MCF 10A (cell line): ENCODE measurements at regions of chr5 and their contacts with region 1.

Region 1: DNA sequence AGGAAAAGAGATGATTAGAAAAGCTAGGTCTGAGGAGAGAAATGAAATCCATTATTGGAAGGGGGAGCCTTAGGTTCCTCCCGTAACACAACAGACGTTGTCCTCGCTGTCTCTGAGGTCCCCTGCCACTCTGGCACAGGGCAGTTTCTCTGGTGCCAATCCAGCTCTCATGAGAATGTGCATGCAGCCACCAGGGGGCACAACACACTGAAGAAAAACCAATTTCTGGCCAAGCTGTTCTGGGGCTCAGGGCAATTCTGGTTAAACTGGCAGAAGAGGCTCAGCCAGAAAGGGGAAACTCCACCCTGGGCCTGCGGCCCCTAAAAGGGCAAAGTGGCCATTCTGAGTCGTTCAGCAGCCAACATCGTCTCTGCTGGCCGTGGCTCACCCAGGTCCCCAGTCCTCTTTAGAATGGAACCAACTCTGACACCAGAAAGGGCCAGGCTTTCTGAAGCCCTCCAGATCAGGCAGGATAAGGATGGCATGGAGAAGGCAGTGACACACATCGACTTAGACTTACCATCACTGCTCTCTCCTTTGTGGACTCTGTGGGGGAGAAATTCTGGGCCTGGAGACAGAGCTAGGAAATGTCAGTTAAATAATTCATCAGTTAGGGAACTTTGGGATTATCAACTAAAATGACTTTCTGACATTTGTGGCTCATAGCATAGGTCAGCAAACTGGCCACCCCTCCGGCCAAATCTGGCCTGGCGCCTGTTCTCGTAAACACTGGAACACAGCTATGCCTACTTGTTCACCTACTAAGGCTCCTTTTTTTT is 58.5 kb upstream of the GOLPH3 start:
- DNase-seq: peak; percentile 75
- H3K4me3 Mint-ChIP-seq: no peak overlapping the region
- H3K27ac Mint-ChIP-seq: no peak overlapping the region
- H3K4me1 Mint-ChIP-seq: no peaks in the 10 kb centered on the region
- H3K27me3 Mint-ChIP-seq: no peaks in the 10 kb centered on the region
- CTCF ChIP-seq: peak; percentile 62

Region 2: GRCh38 chr5:31993165-31993961 is 239.3 kb before region 1 on chr5:
- CTCF ChIA-PET with region 1: no interaction called
- POLR2A ChIA-PET with region 1: no interaction called
- intact Hi-C with region 1: no loop called
- DNase-seq: peak; percentile 39
- H3K4me3 Mint-ChIP-seq: no peak overlapping the region
- H3K27ac Mint-ChIP-seq: no peak overlapping the region
- H3K4me1 Mint-ChIP-seq: peaks cover 42% of the 10 kb centered on the region
- H3K27me3 Mint-ChIP-seq: no peaks in the 10 kb centered on the region
- CTCF ChIP-seq: no peak

Region 3: GRCh38 chr5:32217886-32218396 is 14.7 kb before region 1 on chr5:
- CTCF ChIA-PET with region 1: interaction called, 18 read pairs
- POLR2A ChIA-PET with region 1: no interaction called
- intact Hi-C with region 1: no loop called
- DNase-seq: no peak
- H3K4me3 Mint-ChIP-seq: no peak overlapping the region
- H3K27ac Mint-ChIP-seq: no peak overlapping the region
- H3K4me1 Mint-ChIP-seq: no peaks in the 10 kb centered on the region
- H3K27me3 Mint-ChIP-seq: no peaks in the 10 kb centered on the region
- CTCF ChIP-seq: no peak

Region 4: GRCh38 chr5:32249646-32250045 is 17.0 kb after region 1 on chr5:
- CTCF ChIA-PET with region 1: interaction called, 39 read pairs
- POLR2A ChIA-PET with region 1: no interaction called
- intact Hi-C with region 1: no loop called
- DNase-seq: no peak
- H3K4me3 Mint-ChIP-seq: no peak overlapping the region
- H3K27ac Mint-ChIP-seq: no peak overlapping the region
- H3K4me1 Mint-ChIP-seq: no peaks in the 10 kb centered on the region
- H3K27me3 Mint-ChIP-seq: no peaks in the 10 kb centered on the region
- CTCF ChIP-seq: no peak

Region 5: DNA sequence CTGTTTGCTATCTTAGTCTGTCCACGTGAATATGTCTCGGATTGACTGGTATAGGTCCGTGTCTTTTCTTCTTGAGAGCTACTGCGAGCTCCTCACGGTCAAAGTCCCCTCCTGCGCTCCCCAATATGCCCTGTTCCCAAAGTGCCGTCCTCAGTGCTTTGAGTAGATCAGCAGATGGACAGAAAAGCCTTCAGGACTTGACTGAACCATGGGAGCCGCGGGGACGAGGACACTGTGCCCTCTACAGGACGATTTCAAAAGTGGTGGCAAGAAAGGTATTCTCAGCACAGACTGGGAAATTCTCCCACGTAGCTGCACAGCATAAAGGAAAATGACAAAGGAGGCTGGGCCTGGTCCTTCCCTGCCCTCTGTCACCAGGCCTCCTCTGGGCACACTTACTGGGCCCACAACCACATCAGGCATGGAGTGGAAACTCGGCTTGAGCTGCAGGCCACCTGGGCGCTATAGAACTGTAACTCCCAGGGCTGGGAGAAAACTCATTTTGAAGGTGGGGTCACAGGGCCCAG is 96.7 kb after region 1 on chr5:
- CTCF ChIA-PET with region 1: interaction called, 49 read pairs
- POLR2A ChIA-PET with region 1: interaction called, 4 read pairs
- intact Hi-C with region 1: loop called (anchors 1 kb)
- DNase-seq: peak; percentile 72
- H3K4me3 Mint-ChIP-seq: no peak overlapping the region
- H3K27ac Mint-ChIP-seq: no peak overlapping the region
- H3K4me1 Mint-ChIP-seq: no peaks in the 10 kb centered on the region
- H3K27me3 Mint-ChIP-seq: no peaks in the 10 kb centered on the region
- CTCF ChIP-seq: peak; percentile 56

Region 6: GRCh38 chr5:32390819-32391591 is 158.4 kb after region 1 on chr5:
- CTCF ChIA-PET with region 1: interaction called, 3 read pairs
- POLR2A ChIA-PET with region 1: no interaction called
- intact Hi-C with region 1: loop called (anchors 2 kb)
- DNase-seq: peak; percentile 89
- H3K4me3 Mint-ChIP-seq: peak overlapping the region; percentile 36
- H3K27ac Mint-ChIP-seq: peak overlapping the region; percentile 90
- H3K4me1 Mint-ChIP-seq: peaks cover 22% of the 10 kb centered on the region
- H3K27me3 Mint-ChIP-seq: no peaks in the 10 kb centered on the region
- CTCF ChIP-seq: no peak

Region 7: GRCh38 chr5:32613050-32613672 is 380.5 kb after region 1 on chr5:
- CTCF ChIA-PET with region 1: interaction called, 6 read pairs
- POLR2A ChIA-PET with region 1: interaction called, 3 read pairs
- intact Hi-C with region 1: loop called (anchors 1 kb)
- DNase-seq: peak; percentile 84
- H3K4me3 Mint-ChIP-seq: no peak overlapping the region
- H3K27ac Mint-ChIP-seq: no peak overlapping the region
- H3K4me1 Mint-ChIP-seq: peaks cover 9% of the 10 kb centered on the region
- H3K27me3 Mint-ChIP-seq: no peaks in the 10 kb centered on the region
- CTCF ChIP-seq: peak; percentile 84

Region 8: GRCh38 chr5:32964261-32964660 is 731.6 kb after region 1 on chr5:
- CTCF ChIA-PET with region 1: no interaction called
- POLR2A ChIA-PET with region 1: no interaction called
- intact Hi-C with region 1: no loop called
- DNase-seq: no peak
- H3K4me3 Mint-ChIP-seq: no peak overlapping the region
- H3K27ac Mint-ChIP-seq: no peak overlapping the region
- H3K4me1 Mint-ChIP-seq: peaks cover 12% of the 10 kb centered on the region
- H3K27me3 Mint-ChIP-seq: no peaks in the 10 kb centered on the region
- CTCF ChIP-seq: no peak